ENCODE measurements at regions of chr11 and their contacts with region 1.

Region 1: DNA sequence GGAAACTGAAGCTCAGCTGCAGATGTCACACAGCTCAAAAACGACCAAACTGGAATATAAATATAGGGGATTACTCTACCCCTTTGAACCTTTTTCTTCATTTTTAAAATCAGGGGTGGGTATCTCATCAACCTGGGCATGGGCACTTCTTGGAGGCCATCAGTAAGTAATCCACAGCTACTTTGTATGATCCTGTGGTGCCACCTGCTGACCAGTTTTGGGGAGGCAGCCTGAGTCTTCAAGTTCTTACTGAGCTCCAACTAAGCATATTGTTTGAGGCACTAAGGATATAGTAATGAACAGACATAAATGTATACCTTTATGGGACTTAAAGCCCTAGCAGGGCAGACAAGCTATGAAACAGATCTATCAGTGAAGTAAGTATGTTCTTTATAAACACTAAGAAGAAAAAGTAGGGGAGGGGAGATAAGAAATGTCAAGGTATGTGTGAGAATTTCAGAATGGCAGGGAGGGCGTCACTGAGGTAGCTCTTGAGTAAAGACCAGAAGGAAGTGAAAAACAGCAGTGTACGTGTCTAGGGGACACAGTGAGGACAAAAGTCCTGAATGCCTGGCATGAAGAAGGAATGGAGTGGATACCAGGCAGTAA is 18.4 kb downstream of the TUB start:
- DNase-seq: peak; percentile 80
- H3K4me3 Mint-ChIP-seq: no peak overlapping the region
- H3K27ac Mint-ChIP-seq: no peak overlapping the region
- H3K4me1 Mint-ChIP-seq: no peaks in the 10 kb centered on the region
- H3K27me3 Mint-ChIP-seq: no peaks in the 10 kb centered on the region

Region 2: DNA sequence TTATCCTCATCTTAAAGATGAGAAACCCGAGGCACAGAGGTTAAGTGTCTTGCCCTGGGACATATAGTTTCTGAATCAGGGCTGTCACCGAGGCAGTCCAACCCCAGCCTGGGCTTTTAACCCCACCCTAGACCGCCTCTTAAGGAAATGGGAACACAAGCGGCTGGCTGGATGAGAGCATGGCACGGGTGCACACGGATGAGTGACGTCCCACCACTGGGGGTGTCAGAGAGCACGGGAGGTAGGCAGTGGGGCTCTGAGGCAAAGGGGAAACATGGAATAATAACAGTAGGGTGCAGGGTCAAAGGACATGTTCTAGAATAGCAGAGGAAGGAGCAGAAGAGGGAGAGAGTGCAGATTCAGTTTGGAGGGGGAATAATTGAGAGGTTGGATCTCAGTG is 563.3 kb before region 1 on chr11:
- CTCF ChIA-PET with region 1: no interaction called
- POLR2A ChIA-PET with region 1: no interaction called
- intact Hi-C with region 1: no loop called
- DNase-seq: no peak
- H3K4me3 Mint-ChIP-seq: no peak overlapping the region
- H3K27ac Mint-ChIP-seq: no peak overlapping the region
- H3K4me1 Mint-ChIP-seq: peaks cover 55% of the 10 kb centered on the region
- H3K27me3 Mint-ChIP-seq: no peaks in the 10 kb centered on the region

Region 3: GRCh38 chr11:7892840-7893254 is 206.5 kb before region 1 on chr11:
- CTCF ChIA-PET with region 1: interaction called, 21 read pairs
- POLR2A ChIA-PET with region 1: no interaction called
- intact Hi-C with region 1: loop called (anchors 2 kb)
- DNase-seq: peak; percentile 9
- H3K4me3 Mint-ChIP-seq: no peak overlapping the region
- H3K27ac Mint-ChIP-seq: no peak overlapping the region
- H3K4me1 Mint-ChIP-seq: peaks cover 7% of the 10 kb centered on the region
- H3K27me3 Mint-ChIP-seq: no peaks in the 10 kb centered on the region

Region 4: GRCh38 chr11:8018484-8019313 is 80.7 kb before region 1 on chr11:
- CTCF ChIA-PET with region 1: interaction called, 21 read pairs
- POLR2A ChIA-PET with region 1: no interaction called
- intact Hi-C with region 1: no loop called
- DNase-seq: peak; percentile 78
- H3K4me3 Mint-ChIP-seq: peak overlapping the region; percentile 62
- H3K27ac Mint-ChIP-seq: no peak overlapping the region
- H3K4me1 Mint-ChIP-seq: peaks cover 12% of the 10 kb centered on the region
- H3K27me3 Mint-ChIP-seq: peaks cover 22% of the 10 kb centered on the region

Region 5: GRCh38 chr11:8033305-8034105 is 65.9 kb before region 1 on chr11:
- CTCF ChIA-PET with region 1: interaction called, 122 read pairs
- POLR2A ChIA-PET with region 1: interaction called, 5 read pairs
- intact Hi-C with region 1: loop called (anchors 1 kb)
- DNase-seq: peak; percentile 63
- H3K4me3 Mint-ChIP-seq: no peak overlapping the region
- H3K27ac Mint-ChIP-seq: no peak overlapping the region
- H3K4me1 Mint-ChIP-seq: peaks cover 7% of the 10 kb centered on the region
- H3K27me3 Mint-ChIP-seq: peaks cover 12% of the 10 kb centered on the region

Region 6: GRCh38 chr11:8071616-8072581 is 27.5 kb before region 1 on chr11:
- CTCF ChIA-PET with region 1: interaction called, 10 read pairs
- POLR2A ChIA-PET with region 1: no interaction called
- intact Hi-C with region 1: no loop called
- DNase-seq: no peak
- H3K4me3 Mint-ChIP-seq: no peak overlapping the region
- H3K27ac Mint-ChIP-seq: no peak overlapping the region
- H3K4me1 Mint-ChIP-seq: peaks cover 8% of the 10 kb centered on the region
- H3K27me3 Mint-ChIP-seq: peaks cover 10% of the 10 kb centered on the region

Region 7: GRCh38 chr11:8111636-8112035 is 12.2 kb after region 1 on chr11:
- CTCF ChIA-PET with region 1: interaction called, 24 read pairs
- POLR2A ChIA-PET with region 1: no interaction called
- intact Hi-C with region 1: no loop called
- DNase-seq: no peak
- H3K4me3 Mint-ChIP-seq: no peak overlapping the region
- H3K27ac Mint-ChIP-seq: no peak overlapping the region
- H3K4me1 Mint-ChIP-seq: no peaks in the 10 kb centered on the region
- H3K27me3 Mint-ChIP-seq: no peaks in the 10 kb centered on the region

Region 8: DNA sequence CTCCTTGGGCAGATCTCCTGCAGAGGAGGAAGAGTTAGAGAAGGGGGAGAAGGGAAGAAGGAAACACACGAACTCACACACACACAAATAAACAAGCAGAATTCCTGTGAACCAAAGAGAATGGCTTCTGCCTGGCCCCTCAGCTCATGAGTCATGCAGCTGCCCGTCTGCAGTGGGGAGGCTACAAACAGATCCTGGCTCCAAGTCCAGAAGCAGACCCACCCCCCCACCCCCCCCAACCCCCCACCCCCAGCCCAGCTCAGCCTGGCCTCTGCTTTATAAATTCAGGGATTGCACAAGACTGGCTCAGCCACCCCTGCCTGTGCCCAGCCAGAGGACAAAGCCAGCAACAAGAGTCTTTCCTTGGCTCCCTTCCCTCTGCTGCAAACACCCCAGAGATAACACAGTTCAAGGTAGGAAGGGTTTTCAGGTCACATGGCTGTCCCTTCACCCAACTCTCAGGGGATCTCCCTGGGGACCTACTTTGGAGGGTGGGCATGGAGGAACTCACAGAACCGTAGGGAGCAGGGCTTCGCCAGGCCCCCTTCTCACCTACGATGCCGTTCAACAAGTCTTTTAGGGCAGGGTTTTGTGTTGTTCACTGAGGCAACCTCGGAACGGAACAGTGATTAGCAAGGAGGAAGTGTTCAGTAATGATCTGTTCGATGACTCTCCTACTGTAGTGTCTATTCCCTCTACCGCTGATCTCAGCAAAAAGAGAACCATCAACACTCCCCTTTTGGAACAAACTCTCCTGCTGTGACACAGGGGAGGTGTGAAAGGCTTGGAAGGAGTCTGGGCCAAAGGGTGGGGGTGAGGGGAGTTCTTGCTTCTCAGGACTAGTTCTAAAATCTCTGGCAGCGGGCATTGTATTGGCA is 618.7 kb after region 1 on chr11:
- CTCF ChIA-PET with region 1: no interaction called
- POLR2A ChIA-PET with region 1: no interaction called
- intact Hi-C with region 1: no loop called
- DNase-seq: no peak
- H3K4me3 Mint-ChIP-seq: no peak overlapping the region
- H3K27ac Mint-ChIP-seq: no peak overlapping the region
- H3K4me1 Mint-ChIP-seq: peaks cover 5% of the 10 kb centered on the region
- H3K27me3 Mint-ChIP-seq: no peaks in the 10 kb centered on the region

Measured in activated CD4-positive, alpha-beta memory T cell treated with anti-CD3 and anti-CD28 coated beads for 36 hours (primary cell).